ENCODE measurements at regions of chr17 and their contacts with region 1.

Region 1: GRCh38 chr17:41665566-41666236 is 23.0 kb upstream of the EIF1 start:
- DNase-seq: peak; percentile 96
- H3K4me3 ChIP-seq: peak overlapping the region; percentile 44 to 58
- H3K27ac ChIP-seq: peak overlapping the region; percentile 49 to 77
- H3K4me1 ChIP-seq: peaks cover 4 to 14% of the 10 kb centered on the region in 2 experiments; a peak in 2 of 4 replicates
- H3K27me3 ChIP-seq: no peaks in the 10 kb centered on the region; the same call in 1 of the 2 replicates
- CTCF ChIP-seq: peak; percentile 89
- EP300 ChIP-seq: no peak
- RAD21 ChIP-seq: peak; percentile 29; the same call in 1 of the 2 replicates

Region 2: DNA sequence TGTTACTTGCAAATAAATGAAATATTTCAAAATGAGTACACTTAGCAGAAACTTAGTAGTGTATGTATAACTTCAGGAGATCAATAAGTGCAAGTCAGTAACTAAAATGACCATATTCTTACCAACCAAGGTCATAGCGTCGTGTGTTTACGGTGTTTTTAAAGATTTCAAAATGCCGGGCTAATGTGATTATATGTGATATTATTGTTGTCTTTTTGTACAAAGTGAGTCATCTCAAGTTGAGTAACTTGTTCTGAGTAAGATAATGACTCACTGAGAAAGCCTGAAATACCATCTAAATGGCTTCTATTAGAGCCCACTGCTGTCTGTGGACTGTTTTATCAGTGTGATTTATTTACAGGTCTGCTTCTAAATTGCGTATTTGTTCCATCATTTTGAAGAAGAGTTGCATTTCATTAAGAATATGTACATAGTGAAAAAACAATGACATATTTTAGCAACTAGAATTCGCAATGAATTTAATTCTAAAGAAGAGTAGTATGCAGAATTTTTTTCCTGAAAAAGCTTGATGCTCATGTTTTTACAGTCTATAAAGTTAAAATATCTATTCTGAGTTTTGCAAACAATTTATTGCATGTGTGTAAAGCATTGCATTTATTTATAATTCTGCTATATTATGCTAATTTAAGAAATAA is 811.4 kb before region 1 on chr17:
- CTCF ChIA-PET with region 1: interaction called, 37 read pairs
- POLR2A ChIA-PET with region 1: no interaction called
- DNase-seq: no peak
- H3K4me3 ChIP-seq: no peak overlapping the region
- H3K27ac ChIP-seq: peak overlapping the region in 1 of 2 experiments; percentile 48; a peak in 2 of 4 replicates
- H3K4me1 ChIP-seq: peaks cover 6 to 8% of the 10 kb centered on the region in 2 experiments; a peak in 2 of 4 replicates
- H3K27me3 ChIP-seq: no peaks in the 10 kb centered on the region
- CTCF ChIP-seq: no peak
- EP300 ChIP-seq: peak in 1 of 2 experiments; percentile 62; a peak in 1 of 4 replicates
- RAD21 ChIP-seq: no peak

Region 3: GRCh38 chr17:40915199-40915661 is 750.5 kb before region 1 on chr17:
- CTCF ChIA-PET with region 1: interaction called, 44 read pairs
- POLR2A ChIA-PET with region 1: no interaction called
- DNase-seq: no peak
- H3K4me3 ChIP-seq: no peak overlapping the region
- H3K27ac ChIP-seq: peak overlapping the region in 1 of 2 experiments; percentile 77; a peak in 2 of 4 replicates
- H3K4me1 ChIP-seq: peaks cover 0 to 8% of the 10 kb centered on the region in 2 experiments; a peak in 2 of 4 replicates
- H3K27me3 ChIP-seq: no peaks in the 10 kb centered on the region
- CTCF ChIP-seq: no peak
- EP300 ChIP-seq: no peak
- RAD21 ChIP-seq: no peak

Region 4: GRCh38 chr17:41538565-41538991 is 127.1 kb before region 1 on chr17:
- CTCF ChIA-PET with region 1: interaction called, 18 read pairs
- POLR2A ChIA-PET with region 1: no interaction called
- DNase-seq: no peak
- H3K4me3 ChIP-seq: no peak overlapping the region
- H3K27ac ChIP-seq: peak overlapping the region; percentile 26 to 77; a peak in 2 of 4 replicates
- H3K4me1 ChIP-seq: peaks cover 17 to 37% of the 10 kb centered on the region in 2 experiments; a peak in 3 of 4 replicates
- H3K27me3 ChIP-seq: no peaks in the 10 kb centered on the region
- CTCF ChIP-seq: no peak
- EP300 ChIP-seq: no peak
- RAD21 ChIP-seq: no peak

Region 5: DNA sequence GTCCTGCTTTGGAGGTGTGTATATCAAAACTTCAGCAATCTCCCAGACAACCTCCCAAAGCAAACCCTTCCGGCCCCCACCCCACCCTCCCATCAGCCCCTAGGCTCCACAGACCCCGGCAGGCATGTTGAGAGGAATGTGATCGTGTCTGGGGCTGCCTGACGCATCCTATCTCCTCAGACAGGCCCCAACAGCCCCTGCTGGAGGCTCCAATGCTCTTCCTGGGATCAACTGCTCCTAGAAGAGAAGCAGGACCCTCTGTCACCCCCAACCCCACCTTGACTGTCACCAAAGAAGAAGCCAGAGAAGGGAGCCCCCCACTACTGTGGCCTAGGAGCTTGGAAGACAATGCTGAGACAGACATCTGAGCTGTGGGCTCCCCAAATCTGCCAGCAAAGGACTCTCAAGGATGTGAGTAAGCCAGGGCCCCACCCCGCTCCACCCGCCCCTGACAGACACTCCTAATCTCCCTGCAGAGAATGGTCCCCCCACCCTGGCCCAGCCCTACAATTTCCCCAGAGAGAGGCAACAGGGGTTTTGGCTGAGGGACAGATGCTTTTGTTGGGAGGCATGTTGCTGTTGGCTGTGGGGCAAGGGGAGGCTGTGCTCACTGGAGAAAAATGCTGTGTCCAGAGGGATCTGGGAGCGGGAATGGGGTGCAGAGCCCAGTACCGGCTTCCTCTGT is 77.4 kb before region 1 on chr17:
- CTCF ChIA-PET with region 1: interaction called, 26 read pairs
- POLR2A ChIA-PET with region 1: no interaction called
- DNase-seq: no peak
- H3K4me3 ChIP-seq: no peak overlapping the region
- H3K27ac ChIP-seq: no peak overlapping the region
- H3K4me1 ChIP-seq: no peaks in the 10 kb centered on the region
- H3K27me3 ChIP-seq: peaks cover 21% of the 10 kb centered on the region; the same call in 1 of the 2 replicates
- CTCF ChIP-seq: no peak
- EP300 ChIP-seq: no peak
- RAD21 ChIP-seq: no peak

Region 6: DNA sequence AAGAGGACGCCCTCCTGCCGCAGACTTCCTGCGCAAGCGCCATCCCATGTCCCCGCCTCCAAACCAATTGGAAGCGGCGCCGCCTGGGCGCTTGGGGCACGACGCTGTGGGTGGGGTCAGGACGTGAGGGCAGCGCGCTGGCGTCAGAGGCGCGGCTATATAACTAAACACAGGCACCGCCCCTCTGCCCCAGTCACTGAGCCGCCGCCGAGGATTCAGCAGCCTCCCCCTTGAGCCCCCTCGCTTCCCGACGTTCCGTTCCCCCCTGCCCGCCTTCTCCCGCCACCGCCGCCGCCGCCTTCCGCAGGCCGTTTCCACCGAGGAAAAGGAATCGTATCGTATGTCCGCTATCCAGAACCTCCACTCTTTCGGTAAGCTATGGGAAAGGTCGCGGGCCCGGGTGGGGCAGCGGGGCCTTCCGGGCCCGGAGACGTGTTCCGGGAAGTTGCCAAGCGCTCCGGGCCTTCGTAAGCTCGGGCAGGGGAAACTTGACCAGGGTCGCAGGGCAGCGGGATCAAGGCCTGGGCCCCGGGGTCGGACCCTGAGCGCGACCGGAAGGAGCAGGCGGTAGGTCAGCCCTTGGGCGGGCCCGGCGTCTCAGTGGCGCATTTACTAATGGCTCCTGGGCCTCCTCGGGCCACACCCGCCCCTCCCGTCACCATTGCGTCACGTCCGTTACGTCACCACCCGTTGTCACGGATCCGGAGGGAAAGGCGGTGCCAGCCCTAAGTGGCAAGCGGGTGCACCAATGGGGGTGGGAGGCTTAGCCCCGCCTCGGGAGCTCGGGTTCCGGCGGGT is 23.2 kb after region 1 on chr17 and contains the start of gene EIF1:
- CTCF ChIA-PET with region 1: interaction called, 235 read pairs
- POLR2A ChIA-PET with region 1: interaction called, 8 read pairs
- DNase-seq: peak; percentile 96
- H3K4me3 ChIP-seq: peak within 1 kb of the TSS; percentile 75 to 92
- H3K27ac ChIP-seq: peak within 1 kb of the TSS; percentile 98 to 100
- H3K4me1 ChIP-seq: peaks cover 13 to 21% of the 10 kb centered on the region in 2 experiments
- H3K27me3 ChIP-seq: no peaks in the 10 kb centered on the region
- CTCF ChIP-seq: no peak
- EP300 ChIP-seq: no peak
- RAD21 ChIP-seq: no peak
- polyA plus RNA-seq, gene EIF1: 300 and 336 TPM in 2 replicates